ENCODE measurements at regions of chr3 and their contacts with region 1.

Region 1: GRCh38 chr3:65101450-65101849 is 413.6 kb upstream of the ADAMTS9 start:
- DNase-seq: no peak
- ATAC-seq: no peak
- H3K4me3 ChIP-seq: no peak overlapping the region
- H3K27ac ChIP-seq: no peak overlapping the region
- H3K4me1 ChIP-seq: no peaks in the 10 kb centered on the region
- H3K27me3 ChIP-seq: no peaks in the 10 kb centered on the region
- CTCF ChIP-seq: no peak

Region 2: GRCh38 chr3:64449026-64449425 is 652.4 kb before region 1 on chr3:
- CTCF ChIA-PET with region 1: interaction called, 16 read pairs
- POLR2A ChIA-PET with region 1: no interaction called
- in situ Hi-C with region 1: no loop called
- intact Hi-C with region 1: no loop called
- DNase-seq: no peak
- ATAC-seq: no peak
- H3K4me3 ChIP-seq: no peak overlapping the region
- H3K27ac ChIP-seq: no peak overlapping the region
- H3K4me1 ChIP-seq: no peaks in the 10 kb centered on the region
- H3K27me3 ChIP-seq: peaks cover 4% of the 10 kb centered on the region; the same call in 1 of the 2 replicates
- CTCF ChIP-seq: no peak